Colonic mucosa (tissue), 4 donors: ENCODE measurements at regions of chrX and their contacts with region 1.

Region 1: GRCh38 chrX:40013266-40014195 is 84.2 kb downstream of the BCOR start:
- DNase-seq: peak; percentile 90
- H3K4me3 ChIP-seq: peak overlapping the region; percentile 43
- H3K27ac ChIP-seq: peak overlapping the region; percentile 95
- H3K4me1 ChIP-seq: no peaks in the 10 kb centered on the region
- H3K27me3 ChIP-seq: peaks cover 23% of the 10 kb centered on the region
- CTCF ChIP-seq: no peak

Region 2: GRCh38 chrX:40097497-40098263 is 84.1 kb after region 1 on chrX and contains the start of gene BCOR:
- intact Hi-C with region 1: loop called (anchors 10 kb)
- DNase-seq: peak; percentile 81
- H3K4me3 ChIP-seq: peak within 1 kb of the TSS; percentile 63
- H3K27ac ChIP-seq: peak within 1 kb of the TSS; percentile 91
- H3K4me1 ChIP-seq: no peaks in the 10 kb centered on the region
- H3K27me3 ChIP-seq: peaks cover 36% of the 10 kb centered on the region
- CTCF ChIP-seq: no peak
- total RNA-seq, gene BCOR: 18.3 to 21.3 TPM

Region 3: GRCh38 chrX:40169193-40170101 is 155.9 kb after region 1 on chrX:
- intact Hi-C with region 1: loop called (anchors 10 kb)
- DNase-seq: peak; percentile 79
- H3K4me3 ChIP-seq: no peak overlapping the region
- H3K27ac ChIP-seq: no peak overlapping the region
- H3K4me1 ChIP-seq: no peaks in the 10 kb centered on the region
- H3K27me3 ChIP-seq: peaks cover 44% of the 10 kb centered on the region
- CTCF ChIP-seq: peak; percentile 27

Region 4: DNA sequence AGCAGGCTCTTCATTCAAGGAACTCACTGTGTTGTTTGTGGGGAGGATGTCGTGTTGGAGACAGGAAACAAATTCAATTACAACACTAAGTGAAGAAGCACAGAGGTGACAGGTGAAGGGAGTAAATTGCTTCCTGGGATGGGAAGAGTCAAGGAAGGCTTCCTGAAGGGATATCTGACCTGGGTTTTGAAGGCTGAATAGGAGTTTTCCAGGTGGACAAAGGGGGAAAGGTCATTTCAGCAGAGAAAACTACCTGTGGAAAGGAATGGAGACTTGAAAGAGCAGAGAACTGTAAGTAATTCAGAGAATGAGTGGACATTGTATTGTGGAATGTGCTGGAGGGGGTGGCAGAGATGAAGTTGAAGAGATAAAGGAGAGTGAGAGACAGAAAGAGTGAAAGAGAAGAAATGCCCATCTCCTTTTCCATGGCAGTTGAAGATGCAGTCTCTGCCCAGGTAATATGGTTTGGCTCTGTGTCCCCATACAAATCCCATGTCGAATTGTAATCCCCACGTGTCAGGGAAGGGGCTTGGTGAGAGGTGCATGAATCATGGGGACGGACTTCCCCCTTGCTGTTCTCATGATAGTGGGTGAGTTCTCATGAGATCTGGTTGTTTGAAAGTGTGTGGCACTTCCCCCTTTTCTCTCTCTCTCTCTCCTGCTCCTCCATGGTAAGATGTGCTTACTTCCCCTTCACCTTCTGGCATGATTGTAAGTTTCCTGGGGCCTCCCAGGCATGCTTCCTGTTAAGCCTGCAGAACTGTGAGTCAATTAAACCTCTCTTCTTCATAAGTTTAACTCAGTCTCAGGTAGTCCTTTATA is 289.9 kb after region 1 on chrX:
- intact Hi-C with region 1: no loop called
- DNase-seq: no peak
- H3K4me3 ChIP-seq: no peak overlapping the region
- H3K27ac ChIP-seq: no peak overlapping the region
- H3K4me1 ChIP-seq: no peaks in the 10 kb centered on the region
- H3K27me3 ChIP-seq: peaks cover 7% of the 10 kb centered on the region
- CTCF ChIP-seq: no peak